Caco-2 (cell line): ENCODE measurements at regions of chr7 and their contacts with region 1.

Region 1: DNA sequence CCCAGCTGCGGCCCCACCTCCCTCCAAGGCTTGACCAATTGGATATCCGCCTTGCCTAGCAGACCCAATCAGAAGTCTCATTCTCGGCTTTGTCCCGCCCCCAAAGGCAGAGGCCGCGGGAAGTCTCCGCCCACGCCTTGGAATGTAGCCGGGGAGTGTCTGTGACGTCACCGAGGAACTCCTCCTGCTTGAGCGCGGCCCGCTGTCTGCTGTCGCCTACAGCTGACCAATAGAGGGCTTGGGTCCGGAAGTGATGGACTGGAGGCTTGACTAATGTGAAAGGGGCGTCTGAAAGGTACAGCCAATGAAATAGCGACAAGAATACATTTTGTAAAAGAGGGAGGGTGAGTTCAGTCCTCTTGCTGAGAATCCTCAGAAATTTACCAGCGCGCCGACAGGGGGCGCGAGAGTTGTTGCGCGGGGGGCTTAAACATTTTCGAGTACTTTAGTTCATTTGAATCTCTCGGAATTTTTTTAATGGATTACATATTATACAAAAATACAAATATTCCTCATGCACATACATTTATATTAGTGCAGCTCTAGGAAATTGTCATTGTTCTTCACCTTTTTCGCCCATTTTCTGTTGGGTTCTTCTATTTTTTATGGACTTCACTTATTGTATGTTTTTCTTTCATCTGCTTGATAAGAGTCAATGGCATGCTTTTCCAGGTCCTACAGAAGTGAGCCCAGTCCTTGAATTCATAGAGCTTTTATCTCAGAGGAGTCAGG is 376 bp upstream of the CREB3L2 start:
- DNase-seq: peak; percentile 99
- H3K4me3 ChIP-seq: peak overlapping the region; percentile 100
- H3K4me3 Mint-ChIP-seq: peak overlapping the region; percentile 93
- H3K27ac Mint-ChIP-seq: peak overlapping the region; percentile 91
- H3K4me1 ChIP-seq: peaks cover 27% of the 10 kb centered on the region
- H3K4me1 Mint-ChIP-seq: peaks cover 16% of the 10 kb centered on the region
- H3K27me3 ChIP-seq: no peaks in the 10 kb centered on the region
- H3K27me3 Mint-ChIP-seq: no peaks in the 10 kb centered on the region
- CTCF ChIP-seq: peak; percentile 81 to 86

Region 2: DNA sequence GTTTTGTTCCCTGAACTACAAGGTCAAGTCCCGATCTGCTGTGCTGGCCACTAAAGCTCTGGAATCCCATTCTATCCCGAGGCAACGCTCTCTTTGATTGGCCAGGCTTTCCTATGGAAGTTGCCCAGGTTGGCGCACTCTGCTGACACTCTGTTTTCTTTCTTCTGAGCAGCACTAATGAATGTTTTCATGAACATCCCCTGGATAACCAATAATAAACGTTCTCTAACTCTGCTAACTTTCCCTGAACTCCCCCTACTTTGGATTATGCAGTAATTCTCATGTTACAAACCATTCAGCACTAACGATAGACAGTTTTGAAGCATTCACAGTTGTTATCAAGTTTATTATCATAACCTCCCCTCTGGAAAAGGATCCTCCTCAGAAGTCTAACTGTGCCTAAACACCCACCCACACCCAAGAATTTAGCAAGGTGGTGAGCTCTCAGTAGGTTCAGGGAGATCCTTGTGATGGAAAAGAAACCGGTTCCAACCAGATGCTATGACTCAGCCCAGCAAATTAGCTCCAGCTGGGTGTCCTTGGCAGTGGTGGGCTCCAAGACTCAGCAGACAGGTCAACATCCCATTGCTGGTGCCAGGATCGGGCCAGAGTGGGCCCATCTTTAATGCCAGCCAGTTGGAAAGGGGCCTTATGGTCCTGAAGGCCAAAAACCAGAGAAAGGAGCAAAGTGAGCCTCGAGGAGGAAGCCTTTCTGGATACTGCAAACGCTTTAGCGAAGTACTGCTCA is 68.8 kb before region 1 on chr7:
- CTCF ChIA-PET with region 1: no interaction called
- POLR2A ChIA-PET with region 1: no interaction called
- intact Hi-C with region 1: loop called (anchors 1 kb)
- DNase-seq: no peak
- H3K4me3 ChIP-seq: no peak overlapping the region
- H3K4me3 Mint-ChIP-seq: no peak overlapping the region
- H3K27ac Mint-ChIP-seq: no peak overlapping the region
- H3K4me1 ChIP-seq: peaks cover 56% of the 10 kb centered on the region
- H3K4me1 Mint-ChIP-seq: peaks cover 48% of the 10 kb centered on the region
- H3K27me3 ChIP-seq: no peaks in the 10 kb centered on the region
- H3K27me3 Mint-ChIP-seq: no peaks in the 10 kb centered on the region
- CTCF ChIP-seq: no peak

Region 3: GRCh38 chr7:137962875-137963507 is 39.3 kb before region 1 on chr7:
- CTCF ChIA-PET with region 1: interaction called, 16 read pairs
- POLR2A ChIA-PET with region 1: no interaction called
- intact Hi-C with region 1: loop called (anchors 1 kb)
- DNase-seq: peak; percentile 61
- H3K4me3 ChIP-seq: no peak overlapping the region
- H3K4me3 Mint-ChIP-seq: peak overlapping the region; percentile 48
- H3K27ac Mint-ChIP-seq: peak overlapping the region; percentile 84
- H3K4me1 ChIP-seq: peaks cover 90% of the 10 kb centered on the region
- H3K4me1 Mint-ChIP-seq: peaks cover 75% of the 10 kb centered on the region
- H3K27me3 ChIP-seq: no peaks in the 10 kb centered on the region
- H3K27me3 Mint-ChIP-seq: no peaks in the 10 kb centered on the region
- CTCF ChIP-seq: no peak

Region 4: DNA sequence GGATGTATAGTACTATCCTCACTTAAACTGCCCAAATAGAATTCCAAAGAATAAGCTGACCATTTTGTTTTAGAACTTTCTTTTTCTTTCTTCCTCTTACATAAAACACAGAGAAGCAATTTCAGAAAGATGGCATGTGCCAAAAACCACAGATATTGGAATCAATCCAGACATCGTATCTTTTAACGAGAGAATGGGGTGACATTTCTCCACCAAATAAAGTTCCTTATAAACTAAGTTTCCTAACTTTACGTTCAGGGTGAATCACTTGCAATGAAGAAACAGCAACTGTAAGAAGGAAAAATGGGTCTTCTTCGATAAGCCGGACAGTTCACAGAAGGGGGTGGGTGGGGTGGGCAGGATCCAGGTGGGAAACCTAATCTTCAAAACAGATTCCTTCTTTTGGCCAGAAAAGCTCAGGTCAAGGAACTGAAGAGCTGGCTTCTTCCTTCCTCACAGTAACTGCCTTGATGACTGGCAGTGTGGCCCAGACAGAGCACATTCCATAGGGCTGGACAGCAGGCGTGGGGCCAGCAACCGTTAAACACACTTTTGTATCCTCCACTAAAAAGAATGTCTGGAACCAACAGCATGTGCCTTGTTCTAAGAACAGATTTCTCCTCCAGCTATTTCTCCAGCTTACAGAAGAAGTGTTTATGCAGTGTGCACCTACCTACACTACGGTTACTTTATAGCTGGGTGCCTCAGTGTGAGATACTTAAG is 31.8 kb before region 1 on chr7:
- CTCF ChIA-PET with region 1: interaction called, 6 read pairs
- POLR2A ChIA-PET with region 1: no interaction called
- intact Hi-C with region 1: loop called (anchors 1 kb)
- DNase-seq: no peak
- H3K4me3 ChIP-seq: no peak overlapping the region
- H3K4me3 Mint-ChIP-seq: no peak overlapping the region
- H3K27ac Mint-ChIP-seq: no peak overlapping the region
- H3K4me1 ChIP-seq: peaks cover 58% of the 10 kb centered on the region
- H3K4me1 Mint-ChIP-seq: peaks cover 42% of the 10 kb centered on the region
- H3K27me3 ChIP-seq: no peaks in the 10 kb centered on the region
- H3K27me3 Mint-ChIP-seq: no peaks in the 10 kb centered on the region
- CTCF ChIP-seq: no peak

Region 5: DNA sequence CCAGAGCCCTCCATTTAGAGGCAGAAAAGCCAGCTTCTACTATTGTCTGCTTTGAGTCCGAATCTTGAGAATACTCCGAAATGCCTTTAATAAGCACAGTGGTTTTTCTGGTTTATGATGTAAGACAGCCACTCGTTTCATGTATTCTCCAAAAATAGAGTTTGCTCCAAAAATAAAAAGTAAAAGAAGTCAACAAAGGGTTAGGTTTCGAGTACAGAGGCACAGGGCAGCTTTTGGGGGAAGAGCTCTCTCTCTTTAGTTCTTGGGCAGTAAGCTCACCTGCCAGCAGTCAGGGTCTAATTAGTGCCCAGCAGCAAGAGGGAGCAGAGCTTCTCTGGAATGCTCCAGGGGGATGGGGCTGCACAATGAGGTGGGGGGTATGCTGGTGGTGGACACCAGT is 20.6 kb before region 1 on chr7:
- CTCF ChIA-PET with region 1: interaction called, 3 read pairs
- POLR2A ChIA-PET with region 1: interaction called, 5 read pairs
- intact Hi-C with region 1: loop called (anchors 1 kb)
- DNase-seq: no peak
- H3K4me3 ChIP-seq: no peak overlapping the region
- H3K4me3 Mint-ChIP-seq: no peak overlapping the region
- H3K27ac Mint-ChIP-seq: peak overlapping the region; percentile 29
- H3K4me1 ChIP-seq: peaks cover 82% of the 10 kb centered on the region
- H3K4me1 Mint-ChIP-seq: peaks cover 66% of the 10 kb centered on the region
- H3K27me3 ChIP-seq: no peaks in the 10 kb centered on the region
- H3K27me3 Mint-ChIP-seq: no peaks in the 10 kb centered on the region
- CTCF ChIP-seq: no peak

Region 6: DNA sequence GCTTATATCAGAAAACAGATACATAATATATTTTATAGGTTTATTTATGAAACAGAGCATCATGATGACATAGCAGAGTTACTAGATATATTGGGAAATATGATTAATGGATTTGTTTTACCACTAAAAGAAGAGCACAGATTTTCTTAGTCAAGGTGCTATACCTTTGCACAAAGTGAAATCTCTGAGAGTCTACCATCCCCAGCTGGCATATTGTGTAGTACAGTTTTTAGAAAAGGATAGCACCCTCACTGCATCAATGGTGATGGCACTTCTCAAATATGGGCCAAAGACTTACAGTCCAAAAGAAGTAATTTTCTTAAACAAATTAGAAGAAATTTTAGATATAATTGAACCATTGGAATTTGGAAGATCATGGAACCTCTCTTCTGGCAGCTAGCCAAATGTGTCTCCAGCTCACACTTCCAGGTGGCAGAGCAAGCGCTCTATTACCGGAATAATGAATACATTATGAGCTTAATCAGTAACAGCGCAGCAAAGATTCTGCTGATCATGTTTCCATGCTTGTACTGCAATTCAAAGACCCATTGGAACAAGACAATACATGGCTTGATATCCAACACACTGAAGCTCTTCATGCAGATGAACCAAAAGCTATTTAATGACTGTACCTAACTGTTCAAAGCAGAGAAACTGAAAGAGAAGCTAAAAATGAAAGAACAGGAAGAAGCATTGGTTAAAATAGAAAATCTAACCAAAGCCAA is 21.5 kb after region 1 on chr7:
- CTCF ChIA-PET with region 1: no interaction called
- POLR2A ChIA-PET with region 1: no interaction called
- intact Hi-C with region 1: no loop called
- DNase-seq: no peak
- H3K4me3 ChIP-seq: no peak overlapping the region
- H3K4me3 Mint-ChIP-seq: no peak overlapping the region
- H3K27ac Mint-ChIP-seq: no peak overlapping the region
- H3K4me1 ChIP-seq: peaks cover 31% of the 10 kb centered on the region
- H3K4me1 Mint-ChIP-seq: peaks cover 22% of the 10 kb centered on the region
- H3K27me3 ChIP-seq: no peaks in the 10 kb centered on the region
- H3K27me3 Mint-ChIP-seq: no peaks in the 10 kb centered on the region
- CTCF ChIP-seq: no peak

Region 7: DNA sequence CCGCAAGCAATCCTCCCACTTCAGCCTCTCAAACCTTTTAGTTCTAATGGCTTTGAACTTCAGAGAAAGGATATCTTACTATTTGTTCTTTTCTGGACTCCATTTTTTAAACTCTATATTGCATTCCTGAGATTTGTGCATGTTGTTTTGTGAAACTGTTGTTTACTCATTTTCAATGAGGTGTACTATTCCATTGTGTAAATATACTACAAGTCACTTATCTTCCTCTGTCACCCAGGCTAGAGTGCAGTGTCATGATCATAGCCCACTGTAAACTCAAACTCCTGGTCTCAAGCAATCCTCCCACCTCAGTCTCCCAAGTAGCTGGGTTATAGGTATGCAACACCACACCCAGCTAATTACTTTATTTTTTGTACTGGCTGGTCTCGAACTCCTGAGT is 42.6 kb after region 1 on chr7:
- CTCF ChIA-PET with region 1: no interaction called
- POLR2A ChIA-PET with region 1: no interaction called
- intact Hi-C with region 1: no loop called
- DNase-seq: no peak
- H3K4me3 ChIP-seq: no peak overlapping the region
- H3K4me3 Mint-ChIP-seq: no peak overlapping the region
- H3K27ac Mint-ChIP-seq: no peak overlapping the region
- H3K4me1 ChIP-seq: 0 out of 2 replicates have a peak, but pooled peaks cover 5% of the 10 kb centered on the region
- H3K4me1 Mint-ChIP-seq: no peaks in the 10 kb centered on the region
- H3K27me3 ChIP-seq: no peaks in the 10 kb centered on the region
- H3K27me3 Mint-ChIP-seq: no peaks in the 10 kb centered on the region
- CTCF ChIP-seq: no peak

Region 8: GRCh38 chr7:138257459-138258196 is 255.4 kb after region 1 on chr7:
- CTCF ChIA-PET with region 1: no interaction called
- POLR2A ChIA-PET with region 1: no interaction called
- intact Hi-C with region 1: loop called (anchors 1 kb)
- DNase-seq: peak; percentile 79 to 90
- H3K4me3 ChIP-seq: no peak overlapping the region
- H3K4me3 Mint-ChIP-seq: peak overlapping the region; percentile 4
- H3K27ac Mint-ChIP-seq: peak overlapping the region; percentile 94
- H3K4me1 ChIP-seq: peaks cover 28% of the 10 kb centered on the region
- H3K4me1 Mint-ChIP-seq: peaks cover 10% of the 10 kb centered on the region
- H3K27me3 ChIP-seq: no peaks in the 10 kb centered on the region
- H3K27me3 Mint-ChIP-seq: no peaks in the 10 kb centered on the region
- CTCF ChIP-seq: no peak

Region 9: GRCh38 chr7:138459413-138460175 is 457.3 kb after region 1 on chr7:
- CTCF ChIA-PET with region 1: no interaction called
- POLR2A ChIA-PET with region 1: no interaction called
- intact Hi-C with region 1: loop called (anchors 2 kb)
- DNase-seq: peak; percentile 98
- H3K4me3 ChIP-seq: peak overlapping the region; percentile 31
- H3K4me3 Mint-ChIP-seq: peak overlapping the region; percentile 79
- H3K27ac Mint-ChIP-seq: peak overlapping the region; percentile 22
- H3K4me1 ChIP-seq: peaks cover 22% of the 10 kb centered on the region
- H3K4me1 Mint-ChIP-seq: no peaks in the 10 kb centered on the region
- H3K27me3 ChIP-seq: no peaks in the 10 kb centered on the region
- H3K27me3 Mint-ChIP-seq: no peaks in the 10 kb centered on the region
- CTCF ChIP-seq: peak in 1 of 2 experiments; percentile 41

Region 10: GRCh38 chr7:138625849-138626230 is 623.6 kb after region 1 on chr7:
- CTCF ChIA-PET with region 1: no interaction called
- POLR2A ChIA-PET with region 1: no interaction called
- intact Hi-C with region 1: no loop called
- DNase-seq: no peak
- H3K4me3 ChIP-seq: no peak overlapping the region
- H3K4me3 Mint-ChIP-seq: no peak overlapping the region
- H3K27ac Mint-ChIP-seq: no peak overlapping the region
- H3K4me1 ChIP-seq: no peaks in the 10 kb centered on the region
- H3K4me1 Mint-ChIP-seq: no peaks in the 10 kb centered on the region
- H3K27me3 ChIP-seq: no peaks in the 10 kb centered on the region
- H3K27me3 Mint-ChIP-seq: no peaks in the 10 kb centered on the region
- CTCF ChIP-seq: no peak